Dorsolateral prefrontal cortex (tissue), 120 donors: ENCODE measurements at regions of chr17 and their contacts with region 1.

Region 1: DNA sequence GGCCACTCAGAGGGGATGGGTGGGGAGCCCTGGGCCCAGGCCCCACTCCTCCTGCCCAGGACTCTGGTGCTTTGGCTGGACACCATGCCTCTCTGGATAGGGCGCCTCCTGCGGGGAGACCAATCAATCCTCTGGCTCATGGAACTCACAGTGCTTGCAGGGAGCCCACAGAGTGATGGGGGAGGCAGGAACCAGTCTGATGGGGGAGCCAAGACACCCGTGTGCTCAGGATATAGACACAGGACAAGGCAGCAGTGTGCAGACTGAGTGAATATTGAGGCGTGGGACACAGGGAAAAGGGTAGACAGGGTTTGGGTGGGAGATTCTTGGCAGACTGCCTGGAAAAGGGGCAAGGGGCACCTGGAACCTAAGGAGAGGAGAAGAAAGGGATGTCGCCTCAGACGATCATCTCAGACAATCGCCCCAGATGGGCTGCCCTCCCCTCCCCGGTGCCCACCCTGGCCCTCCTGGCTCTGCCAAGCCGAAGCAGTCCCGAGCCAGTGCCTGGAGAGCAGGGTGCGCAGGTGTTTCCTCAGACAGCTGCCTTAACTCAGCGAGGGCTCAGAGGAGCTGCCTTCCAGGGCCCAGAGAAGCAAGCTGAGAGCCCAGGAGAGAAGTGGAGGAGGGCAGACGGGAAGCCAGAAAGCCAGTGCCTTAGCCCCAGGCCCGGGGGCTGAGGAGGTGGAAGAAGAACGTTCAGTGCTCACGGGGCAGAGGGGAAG is 37.4 kb upstream of the DLX4 start:
- DNase-seq: no peak
- H3K4me3 ChIP-seq: no peak overlapping the region
- H3K27ac ChIP-seq: no peak overlapping the region
- H3K27me3 ChIP-seq: peaks cover 0 to 31% (median 0%) of the 10 kb centered on the region in 45 donors
- CTCF ChIP-seq: no peak

Region 2: DNA sequence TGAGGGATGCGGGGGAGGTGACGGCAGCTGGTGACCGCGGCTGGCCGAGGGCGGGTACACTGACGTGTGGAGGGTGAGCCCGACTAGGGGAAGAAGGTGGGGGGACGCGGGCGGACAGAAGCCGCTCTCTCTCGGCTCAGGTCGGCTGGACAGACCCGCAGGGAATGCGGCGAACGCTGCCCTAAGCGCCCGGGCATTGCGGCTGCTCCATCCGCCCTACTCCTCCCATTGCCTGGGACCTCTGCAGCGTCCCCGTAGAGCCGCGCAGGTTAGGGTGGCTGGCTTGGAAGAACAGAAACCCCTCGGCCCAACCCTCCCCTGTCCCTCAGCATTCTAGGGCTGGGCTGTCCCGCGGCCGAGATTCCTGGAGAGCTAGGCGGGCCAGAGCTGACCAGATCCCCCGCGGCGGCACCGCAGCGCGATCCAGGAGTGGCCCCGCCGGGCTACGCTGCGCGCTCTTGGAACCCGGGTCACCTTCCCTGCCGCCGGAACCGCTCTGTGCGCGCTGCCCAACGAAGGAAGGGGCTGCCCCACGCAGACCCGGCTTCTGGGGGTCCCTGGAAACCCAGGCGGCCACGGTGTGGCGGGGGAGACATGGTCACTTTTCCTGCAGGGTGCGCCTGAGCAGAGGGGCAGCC is 40.4 kb after region 1 on chr17:
- intact Hi-C with region 1: loop called in 1 of 2 experiments (anchors 5 kb)
- DNase-seq: no peak
- H3K4me3 ChIP-seq: peak overlapping the region in 7 of 59 donors; percentile 6 to 42 (median 20)
- H3K27ac ChIP-seq: no peak overlapping the region
- H3K27me3 ChIP-seq: peaks cover 13 to 100% (median 86%) of the 10 kb centered on the region in 45 donors
- CTCF ChIP-seq: no peak

Region 3: DNA sequence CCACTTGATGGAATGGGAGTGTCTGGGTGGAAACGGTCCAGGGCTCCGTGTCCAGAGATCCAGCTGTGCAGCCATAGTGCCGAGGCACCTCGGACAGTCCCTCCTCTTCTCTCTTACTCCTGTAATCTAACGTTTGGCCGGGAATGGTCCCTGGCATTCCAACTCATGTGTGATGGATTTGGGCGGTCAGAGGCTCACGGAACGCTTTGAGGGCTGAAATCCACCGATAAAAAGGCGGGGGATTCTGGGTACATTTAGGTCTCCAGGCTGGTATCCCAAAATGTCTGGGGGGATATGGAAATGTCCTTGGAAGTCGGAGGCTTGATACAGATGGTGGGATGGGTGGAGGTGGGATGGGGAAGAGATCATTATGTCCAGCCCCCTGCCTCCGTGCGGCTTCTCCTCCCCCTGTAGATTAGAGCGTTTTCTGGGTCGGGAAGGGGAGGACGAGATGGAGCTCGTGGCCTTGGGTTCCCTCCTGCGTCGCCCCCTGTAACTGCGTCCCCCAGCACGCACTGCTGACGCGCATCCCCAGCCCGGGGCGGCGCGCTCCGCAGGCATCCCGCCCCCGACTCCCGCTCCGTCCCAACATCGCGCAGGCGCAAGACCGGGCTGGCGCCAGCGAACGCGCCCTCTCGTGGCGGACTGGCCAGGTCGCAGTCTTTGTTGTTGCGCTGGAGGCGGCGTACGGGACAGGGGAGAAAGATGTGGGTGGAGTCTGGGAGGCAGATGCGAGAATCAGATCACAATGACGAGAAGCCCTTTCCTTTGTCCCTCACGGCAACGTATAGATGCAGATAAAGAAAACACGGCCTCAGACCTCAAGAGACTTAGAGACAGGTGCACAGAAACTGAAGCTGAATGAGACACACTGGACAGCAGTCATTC is 229.7 kb after region 1 on chr17:
- intact Hi-C with region 1: no loop called
- DNase-seq: peak; percentile 83 to 96 (median 91)
- H3K4me3 ChIP-seq: peak overlapping the region; percentile 51 to 84 (median 68)
- H3K27ac ChIP-seq: peak overlapping the region in 56 of 59 donors; percentile 19 to 88 (median 73)
- H3K27me3 ChIP-seq: no peaks in the 10 kb centered on the region
- CTCF ChIP-seq: peak; percentile 88 to 99 (median 97)